CD4-positive, alpha-beta T cell (primary cell): ENCODE measurements at regions of chr3 and their contacts with region 1.

Region 1: GRCh38 chr3:122383771-122384697 is at the start of gene FAM162A:
- DNase-seq: peak; percentile 87 to 98 (median 92)
- ATAC-seq: peak; percentile 94
- H3K4me3 ChIP-seq: peak within 1 kb of the TSS; percentile 76
- H3K4me3 Mint-ChIP-seq: peak within 1 kb of the TSS; percentile 94
- H3K27ac ChIP-seq: peak within 1 kb of the TSS; percentile 61 to 71
- H3K27ac Mint-ChIP-seq: peak within 1 kb of the TSS; percentile 87
- H3K4me1 ChIP-seq: peaks cover 17% of the 10 kb centered on the region
- H3K4me1 Mint-ChIP-seq: peaks cover 54% of the 10 kb centered on the region
- H3K27me3 ChIP-seq: no peaks in the 10 kb centered on the region
- H3K27me3 Mint-ChIP-seq: no peaks in the 10 kb centered on the region
- CTCF ChIP-seq: peak; percentile 71
- total RNA-seq, gene FAM162A: 32.8 to 34.6 TPM

Region 2: DNA sequence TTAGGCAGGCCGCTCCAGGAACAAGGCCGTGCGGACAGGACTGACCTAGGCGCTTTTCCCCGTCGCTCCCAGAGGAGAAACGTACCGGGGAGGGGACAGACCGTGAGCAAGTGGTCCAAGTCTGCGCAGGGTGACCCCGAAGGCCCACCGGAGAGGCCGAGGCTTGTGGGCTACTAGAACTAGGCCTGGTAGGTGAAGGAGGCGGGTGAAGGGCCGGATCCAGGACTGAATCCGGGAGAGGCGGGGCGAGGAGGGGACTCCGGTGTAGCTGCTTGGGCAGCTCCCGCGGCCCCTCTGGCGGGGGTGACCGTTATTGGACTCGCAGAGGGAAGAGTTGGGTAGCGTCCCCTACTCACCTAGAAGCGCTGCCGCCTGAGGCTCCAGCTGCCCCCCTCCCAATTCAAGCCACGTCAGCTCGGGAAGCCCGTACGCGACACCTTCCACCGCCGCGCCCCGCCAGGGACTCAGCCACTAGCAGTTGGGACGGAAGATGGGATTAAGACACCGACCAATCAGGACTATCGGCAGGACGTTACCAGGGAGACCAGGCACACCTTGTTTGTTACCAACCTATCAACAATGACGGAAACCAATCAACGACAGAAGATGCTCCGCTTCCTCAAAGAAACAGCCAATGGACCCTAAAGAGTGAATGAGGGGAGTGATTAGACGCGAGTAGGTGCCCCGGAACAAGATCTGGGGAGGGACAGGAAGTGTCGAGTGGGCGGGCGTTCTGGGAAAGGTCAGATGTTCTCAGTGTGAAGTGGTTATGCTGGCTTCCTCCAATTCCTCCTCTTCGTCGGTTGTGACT is 634.6 kb before region 1 on chr3 and contains the start of gene GOLGB1:
- CTCF ChIA-PET with region 1: no interaction called
- POLR2A ChIA-PET with region 1: no interaction called
- intact Hi-C with region 1: loop called (anchors 5 to 10 kb)
- DNase-seq: peak; percentile 80 to 99 (median 86)
- ATAC-seq: peak; percentile 95
- H3K4me3 ChIP-seq: peak within 1 kb of the TSS; percentile 77
- H3K4me3 Mint-ChIP-seq: no peak within 1 kb of the TSS
- H3K27ac ChIP-seq: peak within 1 kb of the TSS; percentile 92 to 96
- H3K27ac Mint-ChIP-seq: no peak within 1 kb of the TSS
- H3K4me1 ChIP-seq: peaks cover 17% of the 10 kb centered on the region
- H3K4me1 Mint-ChIP-seq: peaks cover 5% of the 10 kb centered on the region
- H3K27me3 ChIP-seq: no peaks in the 10 kb centered on the region
- H3K27me3 Mint-ChIP-seq: peaks cover 12% of the 10 kb centered on the region
- CTCF ChIP-seq: no peak
- total RNA-seq, gene GOLGB1: 49.8 to 50.2 TPM

Region 3: GRCh38 chr3:122415720-122416654 is 32.0 kb after region 1 on chr3 and contains the start of gene WDR5B:
- CTCF ChIA-PET with region 1: interaction called, 30 read pairs
- POLR2A ChIA-PET with region 1: interaction called, 102 read pairs
- intact Hi-C with region 1: loop called (anchors 2 kb)
- DNase-seq: peak; percentile 96 to 99 (median 98)
- ATAC-seq: peak; percentile 87
- H3K4me3 ChIP-seq: peak within 1 kb of the TSS; percentile 76
- H3K4me3 Mint-ChIP-seq: peak within 1 kb of the TSS; percentile 97
- H3K27ac ChIP-seq: peak within 1 kb of the TSS; percentile 90 to 91
- H3K27ac Mint-ChIP-seq: peak within 1 kb of the TSS; percentile 100
- H3K4me1 ChIP-seq: peaks cover 22% of the 10 kb centered on the region
- H3K4me1 Mint-ChIP-seq: peaks cover 59% of the 10 kb centered on the region
- H3K27me3 ChIP-seq: no peaks in the 10 kb centered on the region
- H3K27me3 Mint-ChIP-seq: no peaks in the 10 kb centered on the region
- CTCF ChIP-seq: no peak
- total RNA-seq, gene WDR5B: 2.3 to 2.4 TPM

Region 4: GRCh38 chr3:122564155-122564912 is 180.3 kb after region 1 on chr3 and contains the starts of genes DTX3L and PARP9:
- CTCF ChIA-PET with region 1: interaction called, 4 read pairs
- POLR2A ChIA-PET with region 1: interaction called, 8 read pairs
- intact Hi-C with region 1: loop called in 1 of 2 experiments (anchors 5 kb)
- DNase-seq: peak; percentile 47 to 95 (median 76)
- ATAC-seq: peak; percentile 91
- H3K4me3 ChIP-seq: peak within 1 kb of the TSS; percentile 92
- H3K4me3 Mint-ChIP-seq: peak within 1 kb of the TSS; percentile 95
- H3K27ac ChIP-seq: peak within 1 kb of the TSS; percentile 83 to 88
- H3K27ac Mint-ChIP-seq: peak within 1 kb of the TSS; percentile 89
- H3K4me1 ChIP-seq: peaks cover 67% of the 10 kb centered on the region
- H3K4me1 Mint-ChIP-seq: peaks cover 85% of the 10 kb centered on the region
- H3K27me3 ChIP-seq: no peaks in the 10 kb centered on the region
- H3K27me3 Mint-ChIP-seq: no peaks in the 10 kb centered on the region
- CTCF ChIP-seq: no peak
- total RNA-seq, gene DTX3L: 15.4 to 18.6 TPM
- total RNA-seq, gene PARP9: 13.2 to 14.4 TPM

Region 5: DNA sequence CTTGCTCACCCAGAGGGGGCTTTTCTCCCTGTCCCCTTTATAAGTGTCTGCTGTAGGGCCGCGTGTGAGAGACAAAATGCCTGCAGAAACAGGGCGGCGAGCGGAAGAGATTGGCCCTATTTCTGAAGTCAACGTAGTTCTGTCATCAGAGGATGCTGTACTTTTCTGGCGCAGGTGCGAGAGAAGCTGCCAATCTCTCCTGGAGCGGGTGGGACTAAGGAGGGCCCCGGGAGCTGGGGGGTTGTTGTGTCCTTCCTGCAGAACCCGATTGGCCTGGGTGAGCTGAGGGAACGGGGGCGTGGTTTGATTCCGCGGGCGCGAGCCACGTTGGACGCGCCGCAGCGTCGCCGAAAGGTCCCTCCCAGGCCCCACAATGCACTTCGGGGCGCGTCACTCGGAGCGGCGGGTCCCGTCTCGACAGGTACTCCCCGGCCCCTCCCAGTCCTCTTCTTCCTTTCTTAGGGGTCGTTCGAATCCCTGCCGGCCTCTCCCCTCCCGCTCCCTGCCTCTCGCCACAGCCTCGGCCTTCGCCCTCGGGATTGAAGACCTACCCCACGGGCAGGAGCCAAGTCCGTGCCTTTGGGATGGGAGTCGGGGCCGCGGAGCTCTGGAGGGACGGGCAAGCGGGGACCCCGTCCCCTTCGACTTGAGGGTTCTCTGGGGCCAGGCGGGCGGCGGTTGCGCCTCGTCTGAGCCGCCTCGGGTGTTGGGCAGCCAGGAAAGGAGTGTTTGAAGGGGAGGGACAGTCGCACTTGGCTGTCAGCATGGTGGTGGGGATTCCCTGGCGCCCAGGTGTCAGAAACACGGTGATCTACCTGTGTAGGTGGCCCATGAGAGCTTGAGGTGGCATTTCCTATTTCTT is 817.8 kb after region 1 on chr3 and contains the start of gene SEC22A:
- CTCF ChIA-PET with region 1: no interaction called
- POLR2A ChIA-PET with region 1: interaction called, 13 read pairs
- intact Hi-C with region 1: loop called in 1 of 2 experiments (anchors 5 kb)
- DNase-seq: peak; percentile 88 to 99 (median 94)
- ATAC-seq: peak; percentile 95
- H3K4me3 ChIP-seq: peak within 1 kb of the TSS; percentile 88
- H3K4me3 Mint-ChIP-seq: peak within 1 kb of the TSS; percentile 89
- H3K27ac ChIP-seq: peak within 1 kb of the TSS; percentile 96 to 98
- H3K27ac Mint-ChIP-seq: peak within 1 kb of the TSS; percentile 98
- H3K4me1 ChIP-seq: peaks cover 20% of the 10 kb centered on the region
- H3K4me1 Mint-ChIP-seq: peaks cover 44% of the 10 kb centered on the region
- H3K27me3 ChIP-seq: no peaks in the 10 kb centered on the region
- H3K27me3 Mint-ChIP-seq: no peaks in the 10 kb centered on the region
- CTCF ChIP-seq: no peak
- total RNA-seq, gene SEC22A: 7.9 to 11.5 TPM